ENCODE measurements at regions of chr2 and their contacts with region 1.

Region 1: DNA sequence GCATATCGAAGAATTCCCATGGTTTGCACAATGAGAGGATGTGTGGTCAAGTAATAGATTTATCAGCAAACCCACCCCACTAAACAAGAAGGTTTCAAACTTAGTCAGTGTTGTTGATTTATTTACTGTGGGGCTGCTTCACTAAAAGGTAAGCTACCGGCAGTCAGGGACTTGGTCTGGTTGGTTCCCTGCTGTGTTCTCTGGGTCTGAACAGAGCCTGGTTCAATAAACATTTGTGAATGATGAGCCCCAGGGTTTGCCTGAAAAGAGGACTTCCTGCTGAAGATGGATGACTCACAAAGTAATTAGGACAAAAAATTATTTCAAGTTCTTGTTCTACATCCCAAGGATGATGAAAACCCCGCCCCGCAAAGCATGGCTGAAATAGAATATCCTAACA is 108.3 kb downstream of the SPP2 start:
- DNase-seq: no peak
- ATAC-seq: no peak
- H3K4me3 Mint-ChIP-seq: no peak overlapping the region
- H3K27ac Mint-ChIP-seq: no peak overlapping the region
- H3K4me1 Mint-ChIP-seq: peaks cover 20% of the 10 kb centered on the region
- H3K27me3 Mint-ChIP-seq: peaks cover 22% of the 10 kb centered on the region
- CTCF ChIP-seq: no peak

Region 2: DNA sequence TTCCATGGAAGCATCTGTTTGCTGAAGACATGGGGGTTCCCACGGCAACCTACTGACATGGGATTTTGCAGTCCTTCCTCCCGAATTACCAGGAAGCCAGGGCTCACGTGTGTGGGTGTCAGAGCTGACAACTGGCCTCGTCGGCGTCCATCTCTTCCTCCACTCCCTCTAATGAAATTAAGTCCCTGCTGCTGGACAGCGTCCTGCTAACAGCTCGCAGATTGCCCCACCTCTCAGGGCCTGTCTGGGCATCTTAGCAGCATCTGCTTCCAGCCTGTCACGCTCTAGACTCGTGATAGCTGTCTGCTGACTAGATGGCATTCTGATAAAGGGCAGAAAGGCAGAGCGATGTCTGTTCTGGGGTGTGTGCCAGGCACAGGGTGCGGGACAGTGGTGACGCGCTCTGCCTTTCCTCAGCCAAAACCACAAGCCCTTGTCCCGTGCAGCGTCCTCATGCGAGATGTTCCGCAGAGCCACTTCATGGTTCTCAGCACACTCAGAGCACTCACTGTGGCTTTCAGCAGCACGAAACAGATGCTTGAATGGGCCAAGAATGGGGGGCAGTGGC is 176.9 kb after region 1 on chr2:
- CTCF ChIA-PET with region 1: no interaction called
- POLR2A ChIA-PET with region 1: no interaction called
- intact Hi-C with region 1: no loop called
- DNase-seq: no peak
- ATAC-seq: peak; percentile 37
- H3K4me3 Mint-ChIP-seq: no peak overlapping the region
- H3K27ac Mint-ChIP-seq: no peak overlapping the region
- H3K4me1 Mint-ChIP-seq: peaks cover 20% of the 10 kb centered on the region
- H3K27me3 Mint-ChIP-seq: peaks cover 33% of the 10 kb centered on the region
- CTCF ChIP-seq: no peak

Region 3: GRCh38 chr2:234437642-234438304 is 279.0 kb after region 1 on chr2:
- CTCF ChIA-PET with region 1: no interaction called
- POLR2A ChIA-PET with region 1: interaction called, 15 read pairs
- intact Hi-C with region 1: no loop called
- DNase-seq: no peak
- ATAC-seq: no peak
- H3K4me3 Mint-ChIP-seq: no peak overlapping the region
- H3K27ac Mint-ChIP-seq: no peak overlapping the region
- H3K4me1 Mint-ChIP-seq: peaks cover 63% of the 10 kb centered on the region
- H3K27me3 Mint-ChIP-seq: no peaks in the 10 kb centered on the region
- CTCF ChIP-seq: no peak